ENCODE measurements at regions of chr22 and their contacts with region 1.

Region 1: GRCh38 chr22:37608477-37609239 is at the start of gene GGA1:
- H3K4me3 ChIP-seq: peak within 1 kb of the TSS; percentile 96
- H3K27ac ChIP-seq: peak within 1 kb of the TSS; percentile 99
- H3K4me1 ChIP-seq: peaks cover 8% of the 10 kb centered on the region
- CTCF ChIP-seq: no peak; the same call in 1 of the 2 replicates

Region 2: DNA sequence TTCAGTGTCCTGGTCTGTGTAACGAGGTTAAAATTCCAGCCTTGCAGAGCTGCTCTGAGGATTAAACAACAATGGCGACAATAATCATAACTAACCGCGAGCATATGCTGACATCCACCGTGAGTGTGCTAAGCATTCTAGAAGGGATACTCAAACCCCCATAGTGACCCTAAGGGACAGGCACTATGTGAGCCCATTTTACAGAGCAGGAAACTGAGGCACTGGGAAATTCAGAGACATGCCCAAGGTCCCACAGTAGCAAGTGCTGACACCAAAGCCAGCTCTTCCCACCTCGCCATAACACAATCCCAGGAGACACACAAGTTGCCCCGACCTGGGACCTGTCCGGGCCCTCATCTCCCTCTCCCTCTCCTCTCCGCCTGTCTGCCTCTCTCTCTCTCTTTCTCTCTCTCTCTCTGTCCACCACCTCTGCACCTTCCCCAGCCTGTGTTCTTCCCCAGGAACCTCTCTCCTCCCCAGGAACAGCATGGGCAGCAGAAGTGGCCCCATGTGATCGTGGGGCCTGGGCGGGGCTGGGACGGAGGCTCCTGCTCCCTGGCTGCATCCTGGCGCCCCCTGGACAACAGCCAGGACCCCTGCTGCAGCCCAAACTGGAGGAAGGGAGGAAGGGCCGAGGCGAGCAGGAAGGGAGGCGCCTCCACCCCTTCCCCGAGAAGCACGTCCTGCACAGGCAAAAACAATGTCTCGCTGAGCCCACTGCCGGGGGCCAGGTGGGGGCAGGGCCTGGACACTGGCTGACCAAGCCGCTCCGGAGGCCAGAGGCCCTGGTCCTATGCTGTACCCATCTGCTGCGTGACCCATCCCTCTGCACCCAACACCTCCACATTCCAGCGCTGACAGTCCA is 107.7 kb before region 1 on chr22:
- CTCF ChIA-PET with region 1: no interaction called
- POLR2A ChIA-PET with region 1: no interaction called
- H3K4me3 ChIP-seq: no peak overlapping the region
- H3K27ac ChIP-seq: no peak overlapping the region
- H3K4me1 ChIP-seq: no peaks in the 10 kb centered on the region
- CTCF ChIP-seq: no peak; the same call in 1 of the 2 replicates

Region 3: DNA sequence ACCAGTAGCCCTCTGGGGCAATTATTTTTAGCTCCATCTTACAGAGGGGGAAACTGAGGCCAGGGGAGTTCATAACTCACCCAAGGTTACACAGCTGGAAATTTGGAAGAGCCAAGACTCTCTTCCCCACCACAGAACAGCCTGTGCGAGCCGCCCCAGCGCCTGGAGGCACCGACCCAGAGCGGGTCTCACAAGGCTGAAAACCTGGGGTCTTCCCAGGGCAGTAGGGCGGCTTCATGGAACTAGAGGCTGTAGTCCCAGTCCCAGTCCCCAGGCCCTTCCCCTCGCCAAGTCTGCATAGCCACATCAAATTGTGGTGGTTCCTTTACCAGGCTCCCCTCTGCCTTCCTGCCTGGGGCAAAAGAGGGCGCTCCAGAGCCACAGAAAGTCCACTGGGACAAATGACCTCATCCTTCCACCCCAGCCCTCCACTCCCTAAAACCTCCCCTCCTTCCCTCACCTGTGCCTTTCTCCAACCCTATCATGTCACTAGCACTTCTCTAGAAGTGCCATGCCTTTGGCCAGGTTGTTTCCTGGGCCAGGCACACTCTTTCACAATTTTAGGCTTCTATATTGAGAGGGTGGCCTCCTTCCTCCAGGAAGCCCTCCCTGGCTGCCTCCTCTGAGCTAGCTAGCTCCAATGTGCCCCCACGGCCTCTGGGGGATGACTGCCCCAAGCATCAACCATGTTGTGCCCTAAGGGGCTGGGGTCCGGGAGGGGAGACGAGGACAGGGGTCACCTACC is 63.5 kb before region 1 on chr22:
- CTCF ChIA-PET with region 1: interaction called, 29 read pairs
- POLR2A ChIA-PET with region 1: interaction called, 4 read pairs
- H3K4me3 ChIP-seq: no peak overlapping the region
- H3K27ac ChIP-seq: no peak overlapping the region
- H3K4me1 ChIP-seq: peaks cover 6% of the 10 kb centered on the region
- CTCF ChIP-seq: peak; percentile 85

Region 4: GRCh38 chr22:37581504-37581903 is 27.2 kb before region 1 on chr22:
- CTCF ChIA-PET with region 1: interaction called, 12 read pairs
- POLR2A ChIA-PET with region 1: interaction called, 3 read pairs
- H3K4me3 ChIP-seq: no peak overlapping the region
- H3K27ac ChIP-seq: no peak overlapping the region
- H3K4me1 ChIP-seq: 0 out of 2 replicates have a peak, but pooled peaks cover 3% of the 10 kb centered on the region
- CTCF ChIP-seq: no peak

Region 5: DNA sequence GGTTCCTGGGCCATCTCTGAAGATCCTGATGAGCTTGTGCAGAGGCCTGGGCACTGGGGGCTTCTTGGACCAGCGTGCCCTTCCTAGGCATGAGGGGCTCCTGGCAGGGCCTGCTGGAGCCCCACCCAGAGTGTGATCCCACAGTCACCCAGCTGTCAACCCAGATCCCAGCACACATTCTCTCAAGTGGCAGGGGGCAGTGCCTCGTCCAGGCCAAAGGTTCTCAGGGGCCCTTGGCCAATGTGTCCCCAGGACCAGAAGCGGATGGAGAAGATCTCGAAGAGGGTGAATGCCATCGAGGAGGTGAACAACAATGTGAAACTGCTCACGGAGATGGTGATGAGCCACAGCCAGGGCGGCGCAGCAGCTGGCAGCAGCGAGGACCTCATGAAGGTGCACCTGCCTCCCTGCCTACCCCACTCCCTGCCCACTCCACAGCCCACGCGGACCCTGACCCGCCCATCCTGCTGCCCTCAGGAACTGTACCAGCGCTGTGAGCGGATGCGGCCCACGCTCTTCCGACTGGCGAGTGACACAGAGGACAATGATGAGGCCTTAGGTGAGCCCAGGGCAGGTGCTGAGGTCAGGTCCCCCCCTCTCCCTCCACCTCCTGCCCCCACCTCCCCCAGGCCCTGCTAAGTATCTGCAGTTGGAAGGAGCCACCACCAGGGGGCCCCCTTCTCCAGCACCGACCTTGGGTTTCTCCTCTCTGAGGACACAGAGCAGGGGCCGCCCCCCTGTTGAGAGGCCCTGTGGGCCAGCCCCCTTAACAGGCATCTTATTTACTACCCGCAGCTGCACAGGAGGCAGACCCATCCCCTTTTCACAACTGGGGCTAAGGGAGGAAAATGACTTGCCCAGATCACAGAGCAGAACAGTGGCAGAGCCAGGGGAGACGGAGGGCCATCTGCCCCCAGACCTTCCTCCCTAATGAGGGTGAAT is 14.7 kb after region 1 on chr22:
- CTCF ChIA-PET with region 1: interaction called, 12 read pairs
- POLR2A ChIA-PET with region 1: interaction called, 8 read pairs
- H3K4me3 ChIP-seq: no peak overlapping the region
- H3K27ac ChIP-seq: no peak overlapping the region
- H3K4me1 ChIP-seq: no peaks in the 10 kb centered on the region
- CTCF ChIP-seq: peak; percentile 38; the same call in 1 of the 2 replicates

Region 6: DNA sequence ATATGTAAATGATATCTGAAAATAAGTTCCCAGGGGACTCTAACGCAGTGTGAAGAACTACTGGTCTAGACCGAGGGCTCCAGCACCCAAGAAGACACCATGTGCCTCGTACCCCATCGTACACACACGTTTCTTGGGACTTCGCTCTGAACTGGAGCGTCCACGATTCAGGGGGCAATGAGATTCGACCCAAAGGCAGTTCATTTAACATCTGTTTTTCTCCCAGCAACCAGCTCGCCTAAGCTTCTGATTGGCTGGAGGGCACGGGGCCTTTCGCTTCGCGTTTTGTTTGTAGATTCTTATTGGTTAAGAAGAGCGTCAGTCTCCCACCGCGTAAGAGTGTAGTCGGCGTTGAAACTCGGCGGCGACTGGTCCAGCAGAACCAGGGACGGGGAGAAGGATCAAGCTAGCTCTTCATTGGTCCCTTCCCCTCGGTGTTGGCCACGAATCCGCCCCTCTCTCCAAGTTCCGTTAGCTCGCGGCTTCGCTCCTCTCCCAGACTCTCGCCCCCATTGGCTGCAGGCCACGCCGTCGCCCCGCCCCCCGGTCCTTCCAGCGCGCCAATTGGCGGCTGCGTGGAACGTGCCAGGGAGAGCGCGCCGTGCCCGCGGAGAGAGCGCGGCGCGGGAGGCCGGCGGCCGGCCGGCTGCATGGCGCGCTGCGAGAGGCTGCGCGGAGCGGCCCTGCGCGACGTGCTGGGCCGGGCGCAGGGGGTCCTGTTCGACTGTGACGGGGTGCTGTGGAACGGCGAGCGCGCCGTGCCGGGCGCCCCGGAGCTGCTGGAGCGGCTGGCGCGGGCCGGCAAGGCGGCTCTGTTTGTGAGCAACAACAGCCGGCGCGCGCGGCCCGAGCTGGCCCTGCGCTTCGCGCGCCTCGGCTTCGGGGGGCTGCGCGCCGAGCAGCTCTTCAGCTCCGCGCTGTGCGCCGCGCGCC is 49.7 kb after region 1 on chr22 and contains the start of gene PDXP:
- CTCF ChIA-PET with region 1: interaction called, 17 read pairs
- POLR2A ChIA-PET with region 1: interaction called, 11 read pairs
- H3K4me3 ChIP-seq: peak within 1 kb of the TSS; percentile 85
- H3K27ac ChIP-seq: peak within 1 kb of the TSS; percentile 90
- H3K4me1 ChIP-seq: peaks cover 12% of the 10 kb centered on the region
- CTCF ChIP-seq: no peak

Measured in HEK293 (cell line).